Right lobe of liver (tissue), 6 donors: ENCODE measurements at regions of chr5 and their contacts with region 1.

Region 1: DNA sequence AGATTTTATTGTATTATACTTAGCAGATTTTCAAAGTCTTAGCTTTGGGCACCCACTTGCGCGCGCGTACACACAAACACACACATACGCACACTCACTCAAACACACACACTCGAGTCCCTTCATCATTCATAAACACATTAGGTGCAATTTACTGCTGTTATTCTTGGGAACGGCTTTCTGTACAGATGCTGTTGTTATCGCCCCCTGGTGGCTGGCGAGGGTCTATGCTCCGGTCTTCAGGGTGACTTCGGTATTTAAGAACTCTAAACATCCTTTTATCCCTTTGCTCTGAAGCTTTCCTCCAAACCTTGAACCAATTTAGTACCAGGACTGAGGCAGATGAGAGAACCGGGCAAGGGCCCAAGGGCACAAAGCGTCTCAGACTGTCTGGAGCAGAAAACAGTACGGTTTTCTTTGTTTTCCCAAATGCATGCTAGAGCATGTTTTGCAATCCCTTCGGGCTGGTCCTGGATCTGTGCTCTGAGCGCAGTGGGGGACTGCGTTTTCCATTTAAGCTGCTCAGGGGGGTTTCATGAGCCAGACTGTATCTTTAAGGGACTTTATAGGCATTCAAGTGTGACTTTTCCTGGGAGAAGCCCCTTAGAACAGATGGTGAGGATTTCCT is 1.7 kb upstream of the SLIT3 start:
- DNase-seq: peak; percentile 69 to 75 (median 69)
- ATAC-seq: peak; percentile 77 to 89 (median 84)
- H3K4me3 ChIP-seq: no peak overlapping the region
- H3K27ac ChIP-seq: no peak overlapping the region
- H3K4me1 ChIP-seq: no peaks in the 10 kb centered on the region
- H3K27me3 ChIP-seq: peaks cover 0 to 10% of the 10 kb centered on the region in 2 donors
- CTCF ChIP-seq: peak; percentile 69 to 89 (median 87)
- POLR2A ChIP-seq: no peak

Region 2: DNA sequence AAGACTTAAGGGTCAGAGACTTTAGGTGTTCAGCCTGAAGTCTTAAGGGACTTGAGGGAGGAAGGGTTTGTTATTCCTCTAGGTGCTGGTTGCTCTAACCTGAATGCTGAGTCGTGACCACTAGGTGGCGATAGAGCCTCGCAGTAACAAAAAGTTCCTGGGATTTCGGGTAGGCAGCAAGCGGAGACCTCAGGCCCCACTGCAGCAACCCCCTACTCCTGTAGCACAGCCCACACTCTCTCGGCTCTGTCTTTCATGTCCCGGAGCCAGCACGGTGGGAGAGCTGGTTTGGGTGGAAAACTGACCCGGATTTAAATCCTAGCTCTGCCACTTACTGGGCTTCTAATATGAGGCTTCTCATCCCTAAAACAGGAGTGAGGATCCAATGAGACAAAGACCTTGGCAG is 623.1 kb before region 1 on chr5:
- intact Hi-C with region 1: loop called in 1 of 2 experiments (anchors 10 kb)
- DNase-seq: peak; percentile 66 to 76 (median 69)
- ATAC-seq: peak; percentile 55 to 78 (median 58)
- H3K4me3 ChIP-seq: no peak overlapping the region
- H3K27ac ChIP-seq: no peak overlapping the region
- H3K4me1 ChIP-seq: peaks cover 0 to 15% (median 6%) of the 10 kb centered on the region in 4 donors
- H3K27me3 ChIP-seq: no peaks in the 10 kb centered on the region
- CTCF ChIP-seq: peak; percentile 82 to 93 (median 90)
- POLR2A ChIP-seq: no peak

Region 3: DNA sequence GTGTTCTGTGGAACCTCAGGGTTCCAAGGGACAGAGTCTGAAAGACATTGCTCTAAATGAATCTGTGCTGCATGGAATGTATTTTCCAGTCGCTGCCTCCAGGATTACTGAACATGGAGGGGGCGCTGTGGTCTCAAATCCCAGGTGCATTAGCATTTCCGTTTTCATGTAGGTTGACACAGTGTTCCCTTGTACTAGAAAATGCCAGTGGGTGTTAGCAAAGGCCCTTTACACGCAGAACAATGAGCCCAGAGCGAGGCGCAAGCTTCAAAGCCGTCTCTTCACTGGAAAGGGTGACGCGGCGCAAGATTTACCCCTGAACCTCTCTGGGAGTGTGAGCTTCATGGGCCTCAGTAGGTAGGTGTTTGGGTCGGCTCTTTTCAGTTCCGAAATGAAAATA is 309.9 kb before region 1 on chr5:
- intact Hi-C with region 1: loop called (anchors 5 to 10 kb)
- DNase-seq: no peak
- ATAC-seq: no peak
- H3K4me3 ChIP-seq: no peak overlapping the region
- H3K27ac ChIP-seq: no peak overlapping the region
- H3K4me1 ChIP-seq: peaks cover 0 to 4% (median 0%) of the 10 kb centered on the region in 4 donors
- H3K27me3 ChIP-seq: no peaks in the 10 kb centered on the region
- CTCF ChIP-seq: no peak
- POLR2A ChIP-seq: no peak

Region 4: GRCh38 chr5:169339869-169340268 is 37.3 kb after region 1 on chr5:
- intact Hi-C with region 1: no loop called
- DNase-seq: no peak
- ATAC-seq: no peak
- H3K4me3 ChIP-seq: no peak overlapping the region
- H3K27ac ChIP-seq: no peak overlapping the region
- H3K4me1 ChIP-seq: no peaks in the 10 kb centered on the region
- H3K27me3 ChIP-seq: no peaks in the 10 kb centered on the region
- CTCF ChIP-seq: no peak
- POLR2A ChIP-seq: no peak

Region 5: GRCh38 chr5:169467041-169467771 is 164.6 kb after region 1 on chr5:
- intact Hi-C with region 1: no loop called
- DNase-seq: no peak
- ATAC-seq: no peak
- H3K4me3 ChIP-seq: no peak overlapping the region
- H3K27ac ChIP-seq: no peak overlapping the region
- H3K4me1 ChIP-seq: no peaks in the 10 kb centered on the region
- H3K27me3 ChIP-seq: no peaks in the 10 kb centered on the region
- CTCF ChIP-seq: no peak
- POLR2A ChIP-seq: no peak